ENCODE measurements at regions of chr19 and their contacts with region 1.

Region 1: GRCh38 chr19:49850473-49851342 is at the start of gene PTOV1:
- DNase-seq: peak; percentile 88
- H3K4me3 Mint-ChIP-seq: peak within 1 kb of the TSS; percentile 89
- H3K27ac Mint-ChIP-seq: peak within 1 kb of the TSS; percentile 92
- H3K4me1 Mint-ChIP-seq: peaks cover 38% of the 10 kb centered on the region
- H3K27me3 Mint-ChIP-seq: peaks cover 5% of the 10 kb centered on the region
- total RNA-seq, gene PTOV1: 107 and 113 TPM in 2 replicates

Region 2: DNA sequence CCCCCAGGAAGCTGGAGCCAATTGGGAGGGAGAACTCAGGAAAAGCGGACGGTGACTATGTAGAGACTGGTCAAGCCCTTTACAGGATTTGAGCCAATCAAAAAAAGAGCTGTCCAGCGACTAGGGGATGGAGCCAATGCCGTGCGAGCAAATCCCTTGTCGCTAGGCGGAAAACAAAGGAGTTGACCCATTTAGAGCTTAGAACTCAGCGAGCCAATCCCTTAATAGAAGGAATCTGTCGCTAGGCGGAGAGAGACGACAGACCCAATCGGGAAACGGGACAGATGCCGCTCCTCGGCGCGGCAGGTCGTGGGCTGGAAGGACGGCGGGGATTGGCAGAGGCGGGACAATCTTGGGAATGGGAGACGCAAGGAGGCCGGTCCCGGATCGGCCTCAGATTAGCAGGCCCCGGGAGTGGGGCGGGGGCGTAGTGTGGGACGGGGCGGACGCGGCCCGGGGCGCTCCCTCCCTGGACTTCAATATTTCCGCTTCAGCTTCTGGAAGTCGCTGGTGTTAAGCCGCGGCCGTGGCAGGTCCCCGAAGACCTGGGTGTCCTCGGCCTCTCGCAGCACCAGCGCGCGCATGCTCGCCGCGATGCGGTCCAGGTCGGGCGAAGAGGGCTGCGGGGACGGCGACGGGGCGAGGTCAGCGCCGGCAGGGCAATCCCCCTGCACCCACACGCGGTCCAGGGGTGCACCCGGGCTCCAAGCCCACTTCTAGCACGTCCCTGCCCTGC is 18.9 kb after region 1 on chr19:
- intact Hi-C with region 1: loop called (anchors 1 kb)
- DNase-seq: peak; percentile 92
- H3K4me3 Mint-ChIP-seq: no peak overlapping the region
- H3K27ac Mint-ChIP-seq: no peak overlapping the region
- H3K4me1 Mint-ChIP-seq: peaks cover 36% of the 10 kb centered on the region
- H3K27me3 Mint-ChIP-seq: no peaks in the 10 kb centered on the region

Region 3: DNA sequence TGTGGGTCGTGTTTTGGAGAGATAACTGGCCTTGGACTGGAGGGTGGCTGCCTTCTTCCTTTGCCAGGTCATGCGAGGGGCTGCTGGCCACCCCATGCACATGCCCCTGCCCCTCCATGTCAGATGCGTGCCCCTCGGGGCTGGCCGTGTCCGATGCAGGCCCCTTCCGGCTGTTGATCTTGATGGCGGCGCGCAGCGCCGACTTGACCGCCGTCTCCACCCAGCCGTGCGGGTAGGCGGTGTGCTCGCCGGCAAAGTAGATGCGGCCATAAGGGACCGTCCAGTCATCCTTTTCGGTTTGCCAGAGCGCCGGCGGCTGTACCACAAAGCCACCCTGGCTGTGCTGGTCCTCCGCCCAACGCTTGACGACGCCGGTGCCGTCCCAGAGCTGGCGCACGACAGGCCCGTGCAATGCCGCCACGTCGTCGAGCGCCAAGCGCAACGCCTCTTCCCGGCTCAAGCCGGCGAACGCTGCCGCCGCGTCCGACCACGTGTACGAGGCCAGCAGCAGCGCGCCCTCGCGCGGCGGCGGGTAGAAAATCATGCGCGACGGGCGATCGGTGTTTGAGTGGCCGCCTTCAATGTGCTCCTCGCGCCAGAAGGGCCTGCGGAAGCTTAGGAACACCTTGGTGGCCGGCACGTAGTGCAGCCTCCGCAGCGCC is 39.1 kb after region 1 on chr19:
- intact Hi-C with region 1: loop called (anchors 1 kb)
- DNase-seq: peak; percentile 74
- H3K4me3 Mint-ChIP-seq: peak overlapping the region; percentile 80
- H3K27ac Mint-ChIP-seq: peak overlapping the region; percentile 77
- H3K4me1 Mint-ChIP-seq: peaks cover 13% of the 10 kb centered on the region
- H3K27me3 Mint-ChIP-seq: peaks cover 1% of the 10 kb centered on the region

Region 4: GRCh38 chr19:49896863-49897621 is 46.3 kb after region 1 on chr19 and contains the start of gene IL4I1:
- intact Hi-C with region 1: loop called (anchors 2 kb)
- DNase-seq: peak; percentile 54
- H3K4me3 Mint-ChIP-seq: peak within 1 kb of the TSS; percentile 83
- H3K27ac Mint-ChIP-seq: peak within 1 kb of the TSS; percentile 99
- H3K4me1 Mint-ChIP-seq: peaks cover 41% of the 10 kb centered on the region
- H3K27me3 Mint-ChIP-seq: peaks cover 1% of the 10 kb centered on the region
- total RNA-seq, gene IL4I1: 50.0 and 51.5 TPM in 2 replicates

Measured in activated T-helper 1 cell treated with anti-CD3 and anti-CD28 coated beads, Interleukin-12 subunit alpha, Interleukin-12 subunit beta, Interleukin-2, Interleukin-4 antibody, amounts not matched to agents 30 ng/mL and 10 ng/mL and 1 ng/mL, durations not matched to agents 14 hours and 24 hours and 36 hours (primary cell).